Activated T-helper 1 cell treated with anti-CD3 and anti-CD28 coated beads, Interleukin-12 subunit alpha, Interleukin-12 subunit beta, Interleukin-2, Interleukin-4 antibody, amounts not matched to agents 30 ng/mL and 10 ng/mL and 1 ng/mL, durations not matched to agents 14 hours and 24 hours and 36 hours (primary cell): ENCODE measurements at regions of chr4 and their contacts with region 1.

Region 1: DNA sequence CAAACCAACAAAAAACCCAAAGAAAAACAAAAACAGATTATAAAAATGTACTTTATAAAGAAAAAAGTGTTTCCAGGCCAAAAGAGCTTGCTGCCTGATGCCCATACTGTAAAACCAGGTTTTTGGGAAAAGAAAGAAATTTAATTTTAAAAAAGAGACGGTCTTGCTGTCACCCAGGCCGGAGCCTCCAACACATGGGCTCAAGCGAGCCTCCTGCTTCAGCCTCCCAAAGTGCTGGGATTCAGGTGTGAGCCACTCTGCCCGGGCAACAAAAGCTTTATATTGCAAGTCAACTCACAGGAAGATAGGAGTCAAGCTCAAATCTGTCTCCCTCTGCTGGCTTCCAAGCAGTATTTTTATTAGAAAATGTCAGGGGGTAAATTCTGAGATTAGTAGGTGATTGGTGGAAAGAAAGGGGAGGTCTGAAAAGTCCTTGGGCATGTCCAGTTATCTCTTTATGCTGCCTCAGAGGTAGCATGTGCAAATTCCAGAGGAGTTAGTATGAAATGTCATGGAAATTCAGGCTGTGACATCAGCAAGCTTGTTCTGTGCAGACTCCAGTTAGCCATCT is 39.4 kb downstream of the MGST2 start:
- DNase-seq: no peak
- H3K4me3 Mint-ChIP-seq: no peak overlapping the region
- H3K27ac Mint-ChIP-seq: no peak overlapping the region
- H3K4me1 Mint-ChIP-seq: no peaks in the 10 kb centered on the region
- H3K27me3 Mint-ChIP-seq: no peaks in the 10 kb centered on the region

Region 2: DNA sequence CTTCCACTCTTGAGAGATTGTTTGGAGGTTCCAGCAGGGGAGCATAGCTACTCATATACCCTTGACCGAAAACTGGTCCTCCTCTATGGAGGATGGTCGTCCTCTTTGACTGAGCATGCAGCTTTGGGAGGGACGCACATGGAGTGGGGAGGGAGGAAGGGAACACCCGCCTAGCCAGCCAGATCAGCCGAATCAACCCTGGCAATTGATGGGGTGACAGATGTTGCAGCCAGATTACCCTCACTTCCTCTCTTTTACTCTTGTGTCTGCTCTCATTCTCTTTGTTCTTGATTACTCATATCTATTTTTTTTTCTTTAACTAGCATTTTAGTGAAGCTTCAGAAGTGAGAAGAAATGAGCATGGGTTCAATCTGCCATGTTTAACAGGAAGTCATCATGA is 19.8 kb before region 1 on chr4:
- intact Hi-C with region 1: loop called (anchors 2 kb)
- DNase-seq: no peak
- H3K4me3 Mint-ChIP-seq: no peak overlapping the region
- H3K27ac Mint-ChIP-seq: peak overlapping the region; percentile 10
- H3K4me1 Mint-ChIP-seq: peaks cover 29% of the 10 kb centered on the region
- H3K27me3 Mint-ChIP-seq: no peaks in the 10 kb centered on the region

Region 3: GRCh38 chr4:140617499-140618248 is 912.7 kb after region 1 on chr4:
- intact Hi-C with region 1: no loop called
- DNase-seq: no peak
- H3K4me3 Mint-ChIP-seq: no peak overlapping the region
- H3K27ac Mint-ChIP-seq: no peak overlapping the region
- H3K4me1 Mint-ChIP-seq: no peaks in the 10 kb centered on the region
- H3K27me3 Mint-ChIP-seq: peaks cover 3% of the 10 kb centered on the region